ENCODE measurements at regions of chr5 and their contacts with region 1.

Region 1: DNA sequence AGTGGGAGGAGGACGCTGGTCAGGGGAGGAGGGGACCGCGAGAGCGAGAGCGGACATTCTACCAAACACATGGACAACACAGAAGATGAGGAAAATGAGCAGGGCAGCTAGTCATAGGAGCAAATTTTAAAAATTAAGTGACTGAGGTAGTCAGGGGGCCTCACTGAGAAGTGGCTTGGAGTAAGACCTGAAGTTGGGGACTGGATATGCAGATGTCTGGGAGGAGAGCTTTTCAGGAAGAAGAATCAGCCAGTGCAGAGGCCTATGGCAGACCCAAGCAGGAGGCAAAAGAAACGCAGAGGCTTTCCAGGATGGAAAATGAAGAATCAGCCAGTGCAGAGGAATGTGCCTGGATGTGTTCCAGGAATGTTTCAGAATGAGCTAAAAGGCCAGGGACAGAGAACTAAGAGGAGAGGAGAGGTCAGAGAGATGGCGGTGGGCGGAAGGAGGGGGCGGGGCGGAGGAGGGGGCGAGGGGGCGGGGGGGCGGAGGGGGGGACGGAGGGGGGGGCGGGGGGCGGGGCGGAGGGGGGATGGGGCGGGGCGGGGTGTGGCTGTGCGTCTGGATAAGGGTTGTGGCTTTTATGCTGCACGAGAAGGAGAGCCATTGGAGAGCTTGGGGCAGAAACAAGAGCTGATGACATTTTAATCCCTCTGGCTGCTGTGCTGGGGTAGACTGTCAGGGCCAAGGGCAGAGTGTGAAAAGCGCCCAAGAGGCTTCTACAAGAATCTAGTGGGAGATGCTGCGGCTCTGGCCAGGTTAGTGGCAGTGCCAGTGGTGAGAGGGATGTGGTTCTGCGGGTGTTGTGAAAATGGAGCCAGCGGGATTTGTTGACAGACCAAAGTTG is 129.6 kb downstream of the KCNIP1 start:
- DNase-seq: peak; percentile 83
- H3K4me3 ChIP-seq: peak overlapping the region in 2 of 3 experiments; percentile 23 to 49
- H3K27ac ChIP-seq: peak overlapping the region; percentile 64
- H3K4me1 ChIP-seq: peaks cover 9% of the 10 kb centered on the region
- H3K27me3 ChIP-seq: peaks cover 0 to 4% of the 10 kb centered on the region in 2 experiments
- CTCF ChIP-seq: no peak
- POLR2A ChIP-seq: peak; percentile 30

Region 2: DNA sequence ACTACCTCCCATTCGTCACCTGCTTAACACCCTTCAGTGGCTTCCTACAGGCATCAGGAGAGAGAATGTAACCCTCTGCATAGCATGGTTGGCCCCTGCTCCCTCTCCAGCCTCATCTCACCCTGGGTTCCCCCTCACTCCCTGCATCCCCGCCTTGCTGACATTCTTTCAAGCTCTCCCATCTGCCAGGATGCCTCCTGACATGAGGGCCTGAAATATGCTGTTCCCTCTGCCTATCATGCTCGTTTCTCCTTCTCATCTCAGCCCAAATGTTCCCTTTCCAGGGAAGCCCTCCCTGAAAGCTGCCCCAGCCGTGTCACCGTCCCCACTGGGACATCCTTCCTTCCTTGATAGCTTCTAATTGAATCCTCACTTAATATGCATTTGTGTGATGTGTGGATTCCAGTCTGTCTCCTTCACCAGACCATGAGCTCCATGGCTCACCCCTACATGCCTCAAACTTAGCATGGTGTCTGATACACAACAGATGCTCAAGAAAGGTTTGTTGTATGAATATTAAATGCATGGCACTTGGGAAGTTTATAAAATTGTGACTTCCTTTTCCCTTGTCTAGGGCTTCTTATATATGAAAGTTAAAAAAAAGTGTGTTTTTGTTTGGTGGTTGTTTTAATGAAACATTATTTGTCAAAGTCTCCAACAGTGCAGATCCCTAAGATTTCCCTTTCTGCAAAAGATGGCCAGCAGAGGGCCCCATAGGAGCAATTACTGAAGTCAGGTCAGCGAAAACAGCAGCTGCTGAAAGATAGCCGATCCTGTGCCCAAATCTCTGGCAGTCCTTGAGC is 407.9 kb before region 1 on chr5:
- CTCF ChIA-PET with region 1: interaction called, 33 read pairs
- POLR2A ChIA-PET with region 1: no interaction called
- dilution Hi-C with region 1: no loop called
- intact Hi-C with region 1: loop called (anchors 1 kb)
- DNase-seq: peak; percentile 64
- H3K4me3 ChIP-seq: no peak overlapping the region
- H3K27ac ChIP-seq: peak overlapping the region; percentile 23
- H3K4me1 ChIP-seq: peaks cover 45% of the 10 kb centered on the region
- H3K27me3 ChIP-seq: peaks cover 0 to 3% of the 10 kb centered on the region in 2 experiments
- CTCF ChIP-seq: peak; percentile 64 to 74
- POLR2A ChIP-seq: no peak

Region 3: GRCh38 chr5:170429014-170429413 is 204.4 kb before region 1 on chr5:
- CTCF ChIA-PET with region 1: interaction called, 288 read pairs
- POLR2A ChIA-PET with region 1: no interaction called
- dilution Hi-C with region 1: no loop called
- intact Hi-C with region 1: no loop called
- DNase-seq: no peak
- H3K4me3 ChIP-seq: no peak overlapping the region
- H3K27ac ChIP-seq: no peak overlapping the region
- H3K4me1 ChIP-seq: no peaks in the 10 kb centered on the region
- H3K27me3 ChIP-seq: peaks cover 8 to 10% of the 10 kb centered on the region in 2 experiments
- CTCF ChIP-seq: peak in 1 of 2 donors; percentile 19
- POLR2A ChIP-seq: no peak

Region 4: GRCh38 chr5:170479484-170479883 is 154.0 kb before region 1 on chr5:
- CTCF ChIA-PET with region 1: interaction called, 12 read pairs
- POLR2A ChIA-PET with region 1: no interaction called
- dilution Hi-C with region 1: no loop called
- intact Hi-C with region 1: no loop called
- DNase-seq: peak; percentile 71
- H3K4me3 ChIP-seq: no peak overlapping the region
- H3K27ac ChIP-seq: peak overlapping the region; percentile 52
- H3K4me1 ChIP-seq: peaks cover 6% of the 10 kb centered on the region
- H3K27me3 ChIP-seq: no peaks in the 10 kb centered on the region
- CTCF ChIP-seq: peak in 1 of 2 donors; percentile 12
- POLR2A ChIP-seq: no peak

Region 5: DNA sequence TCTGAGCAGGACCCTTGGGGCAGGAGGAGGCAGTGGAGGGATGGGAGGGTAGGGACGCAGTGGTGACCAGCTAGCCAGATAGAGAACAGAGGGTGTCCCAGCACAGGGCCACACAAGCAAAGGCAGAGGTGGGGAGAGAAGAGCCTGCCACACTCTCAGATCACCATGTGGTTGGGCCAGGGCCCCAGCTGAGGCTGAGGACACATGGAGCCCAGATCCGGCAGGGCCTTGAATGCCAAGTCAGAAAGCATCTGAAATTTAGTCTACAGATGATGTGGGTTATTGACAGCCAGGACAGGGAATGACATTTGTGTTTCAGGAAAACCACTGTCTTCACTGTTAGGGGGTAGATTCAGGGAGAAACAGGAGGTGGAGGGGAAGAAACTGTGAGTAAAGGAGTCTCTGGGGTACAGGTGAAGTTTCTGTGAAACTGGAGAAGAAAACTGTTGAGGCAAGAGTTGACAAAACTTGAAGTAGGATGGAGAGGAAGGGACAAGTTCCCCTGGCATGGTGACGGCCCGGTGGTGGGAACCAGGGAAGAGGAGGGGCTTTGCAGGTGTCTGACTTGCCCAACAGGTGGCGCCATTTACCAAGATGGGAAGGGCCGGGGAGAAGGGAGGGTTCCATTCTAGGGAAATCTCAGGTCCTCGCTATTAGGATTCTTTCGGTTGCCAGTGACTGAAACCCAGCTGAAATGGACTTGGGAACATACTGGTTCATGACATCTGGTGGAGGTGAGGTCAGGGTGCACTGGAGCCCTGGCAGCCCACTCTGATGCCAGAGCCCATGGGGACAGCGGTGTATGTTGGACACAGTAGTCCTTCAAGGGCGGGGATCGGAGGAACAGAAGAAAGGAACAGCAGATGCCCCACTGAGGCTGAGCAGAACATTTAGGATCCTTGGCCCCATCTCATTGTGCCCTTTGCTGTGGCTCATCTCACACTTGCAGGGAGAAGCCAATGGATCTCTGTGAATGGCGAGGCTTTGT is 29.6 kb before region 1 on chr5:
- CTCF ChIA-PET with region 1: interaction called, 38 read pairs
- POLR2A ChIA-PET with region 1: no interaction called
- dilution Hi-C with region 1: no loop called
- intact Hi-C with region 1: loop called (anchors 1 kb)
- DNase-seq: peak; percentile 34
- H3K4me3 ChIP-seq: no peak overlapping the region
- H3K27ac ChIP-seq: no peak overlapping the region
- H3K4me1 ChIP-seq: no peaks in the 10 kb centered on the region
- H3K27me3 ChIP-seq: peaks cover 0 to 2% of the 10 kb centered on the region in 2 experiments
- CTCF ChIP-seq: peak; percentile 65 to 77
- POLR2A ChIP-seq: no peak

Measured in endothelial cell of umbilical vein (primary cell).